Mammary epithelial cell (primary cell): ENCODE measurements at regions of chr1 and their contacts with region 1.

Region 1: GRCh38 chr1:64744492-64745180 is at the start of gene RAVER2:
- DNase-seq: peak; percentile 71
- H3K4me3 ChIP-seq: peak within 1 kb of the TSS; percentile 79 to 87 (median 80)
- H3K27ac ChIP-seq: peak within 1 kb of the TSS; percentile 35
- H3K4me1 ChIP-seq: peaks cover 5% of the 10 kb centered on the region
- H3K27me3 ChIP-seq: no peaks in the 10 kb centered on the region
- CTCF ChIP-seq: peak; percentile 17 to 70
- total RNA-seq, gene RAVER2: 9.7 to 15.8 TPM

Region 2: GRCh38 chr1:64616039-64616438 is 128.6 kb before region 1 on chr1:
- CTCF ChIA-PET with region 1: no interaction called
- dilution Hi-C with region 1: no loop called
- in situ Hi-C with region 1: no loop called
- intact Hi-C with region 1: no loop called
- DNase-seq: no peak
- H3K4me3 ChIP-seq: no peak overlapping the region
- H3K27ac ChIP-seq: no peak overlapping the region
- H3K4me1 ChIP-seq: no peaks in the 10 kb centered on the region
- H3K27me3 ChIP-seq: no peaks in the 10 kb centered on the region
- CTCF ChIP-seq: no peak

Region 3: GRCh38 chr1:64686828-64687724 is 57.6 kb before region 1 on chr1:
- CTCF ChIA-PET with region 1: no interaction called
- dilution Hi-C with region 1: no loop called
- in situ Hi-C with region 1: no loop called
- intact Hi-C with region 1: loop called (anchors 2 kb)
- DNase-seq: peak; percentile 21
- H3K4me3 ChIP-seq: no peak overlapping the region
- H3K27ac ChIP-seq: peak overlapping the region; percentile 3
- H3K4me1 ChIP-seq: peaks cover 14% of the 10 kb centered on the region
- H3K27me3 ChIP-seq: no peaks in the 10 kb centered on the region
- CTCF ChIP-seq: peak; percentile 86 to 88

Region 4: DNA sequence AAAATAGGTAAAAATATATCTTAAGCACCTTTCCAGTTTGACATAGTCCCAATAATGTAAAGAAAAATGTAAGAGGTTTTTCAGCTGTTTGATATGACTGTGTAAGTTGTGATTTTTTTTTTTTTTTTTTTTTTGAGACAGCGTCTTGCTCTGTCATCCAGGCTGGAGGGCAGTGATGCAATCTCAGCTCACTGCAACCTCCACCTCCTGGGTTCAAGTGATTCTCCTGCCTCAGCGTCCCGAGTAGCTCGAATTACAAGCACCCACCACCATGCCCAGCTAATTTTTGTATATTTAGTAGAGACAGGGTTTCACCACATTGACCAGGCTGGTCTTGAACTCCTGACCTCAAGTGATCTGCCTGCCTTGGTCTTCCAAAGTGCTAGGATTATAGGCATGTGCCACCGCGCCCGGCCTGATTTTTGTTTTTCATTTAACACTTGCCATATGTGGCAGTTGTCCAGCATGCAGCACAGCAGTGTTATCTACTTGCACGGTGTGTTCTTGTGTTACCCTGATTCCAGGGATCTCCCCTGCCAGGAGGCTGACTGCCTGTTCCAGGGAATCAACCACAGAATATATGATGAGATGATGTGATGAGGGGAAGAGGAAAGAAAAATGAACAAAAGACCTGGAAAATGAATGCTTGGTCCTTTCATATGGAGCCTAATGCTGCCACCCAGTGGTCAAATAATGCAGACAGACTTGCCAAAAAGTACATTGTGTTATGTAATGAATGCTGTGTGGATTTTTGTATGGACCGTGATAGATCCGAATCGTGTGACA is 79.2 kb after region 1 on chr1:
- CTCF ChIA-PET with region 1: no interaction called
- dilution Hi-C with region 1: no loop called
- in situ Hi-C with region 1: no loop called
- intact Hi-C with region 1: loop called (anchors 1 kb)
- DNase-seq: peak; percentile 59
- H3K4me3 ChIP-seq: no peak overlapping the region
- H3K27ac ChIP-seq: no peak overlapping the region
- H3K4me1 ChIP-seq: no peaks in the 10 kb centered on the region
- H3K27me3 ChIP-seq: no peaks in the 10 kb centered on the region
- CTCF ChIP-seq: peak; percentile 66 to 83

Region 5: DNA sequence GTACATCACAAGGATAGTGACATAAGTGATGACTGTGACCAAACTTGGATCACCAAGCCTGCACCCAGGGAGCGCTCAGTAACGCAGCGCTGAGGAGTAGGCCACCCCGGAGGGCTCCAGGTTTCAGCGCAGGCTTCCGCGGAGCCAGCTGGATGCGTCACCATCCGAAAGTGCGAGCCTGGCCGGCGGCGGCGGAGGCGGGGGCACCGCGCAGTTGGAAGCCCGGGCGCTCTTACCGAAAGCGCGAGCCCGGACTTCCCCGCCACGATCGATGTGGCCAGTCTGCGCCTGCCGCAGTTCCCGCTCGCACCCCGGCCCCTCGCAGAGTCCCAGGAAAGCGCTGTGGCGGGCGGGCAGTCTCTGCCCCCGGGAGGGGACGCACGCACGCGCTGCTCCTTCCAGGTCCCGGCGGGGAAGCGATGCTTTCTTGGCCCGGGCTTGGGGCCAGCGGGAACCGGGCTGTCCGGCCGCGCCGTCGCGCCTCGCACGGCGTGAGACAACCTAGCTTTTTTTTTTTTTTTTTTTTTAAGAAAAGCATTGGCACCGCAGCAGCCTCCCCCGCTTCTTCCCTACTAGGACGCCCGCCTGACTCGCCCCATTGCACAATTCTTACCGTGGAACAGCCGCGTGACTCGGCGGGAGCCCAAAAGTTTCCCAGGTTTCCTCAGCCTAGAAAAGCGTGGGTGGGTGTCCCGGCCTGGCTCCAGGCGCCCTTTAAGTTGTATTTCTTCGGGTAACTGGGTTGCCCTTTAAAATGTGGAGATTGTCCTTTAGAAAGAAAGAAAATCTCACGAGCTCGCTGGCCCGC is 258.1 kb after region 1 on chr1:
- CTCF ChIA-PET with region 1: no interaction called
- dilution Hi-C with region 1: no loop called
- in situ Hi-C with region 1: no loop called
- intact Hi-C with region 1: loop called (anchors 10 kb)
- DNase-seq: peak; percentile 89
- H3K4me3 ChIP-seq: peak overlapping the region; percentile 70 to 74 (median 70)
- H3K27ac ChIP-seq: peak overlapping the region; percentile 94
- H3K4me1 ChIP-seq: peaks cover 9% of the 10 kb centered on the region
- H3K27me3 ChIP-seq: no peaks in the 10 kb centered on the region
- CTCF ChIP-seq: no peak